Aorta (tissue), 5 donors: ENCODE measurements at regions of chr13 and their contacts with region 1.

Region 1: DNA sequence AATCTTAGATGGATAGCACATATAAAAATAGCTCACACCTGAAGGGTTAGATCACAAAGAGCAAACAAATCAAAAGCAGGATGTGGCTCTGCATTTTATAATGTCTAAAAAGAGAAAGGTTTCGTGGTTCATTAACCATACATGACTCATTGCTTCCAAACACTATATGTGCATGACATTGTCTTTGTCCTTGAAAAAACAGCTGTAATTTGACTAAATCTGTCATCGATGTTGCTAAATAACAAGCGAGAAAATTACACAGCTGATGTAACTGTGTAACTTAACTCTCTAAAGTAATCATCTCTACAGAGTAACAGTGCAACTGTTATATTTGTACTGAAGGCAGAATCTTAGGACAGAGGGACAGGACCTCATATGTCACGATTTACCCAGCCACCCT is 383.1 kb upstream of the GPC6 start:
- DNase-seq: no peak
- ATAC-seq: no peak
- H3K4me3 ChIP-seq: no peak overlapping the region
- H3K27ac ChIP-seq: no peak overlapping the region
- H3K4me1 ChIP-seq: peaks cover 0 to 3% of the 10 kb centered on the region in 2 donors
- H3K27me3 ChIP-seq: no peaks in the 10 kb centered on the region

Region 2: GRCh38 chr13:92806215-92806614 is 37.3 kb before region 1 on chr13:
- intact Hi-C with region 1: loop called in 1 of 2 experiments (anchors 5 kb)
- DNase-seq: no peak
- ATAC-seq: peak; percentile 64
- H3K4me3 ChIP-seq: peak overlapping the region; percentile 26 to 34
- H3K27ac ChIP-seq: no peak overlapping the region
- H3K4me1 ChIP-seq: peaks cover 3 to 7% of the 10 kb centered on the region in 2 donors
- H3K27me3 ChIP-seq: no peaks in the 10 kb centered on the region

Region 3: GRCh38 chr13:93248627-93249047 is 405.1 kb after region 1 on chr13:
- intact Hi-C with region 1: loop called in 1 of 2 experiments (anchors 5 kb)
- DNase-seq: peak; percentile 50 to 80
- ATAC-seq: peak; percentile 44
- H3K4me3 ChIP-seq: no peak overlapping the region
- H3K27ac ChIP-seq: no peak overlapping the region
- H3K4me1 ChIP-seq: no peaks in the 10 kb centered on the region
- H3K27me3 ChIP-seq: no peaks in the 10 kb centered on the region